Endothelial cell of umbilical vein (primary cell): ENCODE measurements at regions of chr9 and their contacts with region 1.

Region 1: GRCh38 chr9:14096258-14096922 is 217.6 kb downstream of the NFIB start:
- DNase-seq: peak; percentile 97
- H3K4me3 ChIP-seq: peak overlapping the region in 1 of 3 experiments; percentile 60
- H3K27ac ChIP-seq: peak overlapping the region; percentile 96
- H3K4me1 ChIP-seq: peaks cover 55% of the 10 kb centered on the region
- H3K27me3 ChIP-seq: no peaks in the 10 kb centered on the region
- CTCF ChIP-seq: no peak
- POLR2A ChIP-seq: peak; percentile 44

Region 2: DNA sequence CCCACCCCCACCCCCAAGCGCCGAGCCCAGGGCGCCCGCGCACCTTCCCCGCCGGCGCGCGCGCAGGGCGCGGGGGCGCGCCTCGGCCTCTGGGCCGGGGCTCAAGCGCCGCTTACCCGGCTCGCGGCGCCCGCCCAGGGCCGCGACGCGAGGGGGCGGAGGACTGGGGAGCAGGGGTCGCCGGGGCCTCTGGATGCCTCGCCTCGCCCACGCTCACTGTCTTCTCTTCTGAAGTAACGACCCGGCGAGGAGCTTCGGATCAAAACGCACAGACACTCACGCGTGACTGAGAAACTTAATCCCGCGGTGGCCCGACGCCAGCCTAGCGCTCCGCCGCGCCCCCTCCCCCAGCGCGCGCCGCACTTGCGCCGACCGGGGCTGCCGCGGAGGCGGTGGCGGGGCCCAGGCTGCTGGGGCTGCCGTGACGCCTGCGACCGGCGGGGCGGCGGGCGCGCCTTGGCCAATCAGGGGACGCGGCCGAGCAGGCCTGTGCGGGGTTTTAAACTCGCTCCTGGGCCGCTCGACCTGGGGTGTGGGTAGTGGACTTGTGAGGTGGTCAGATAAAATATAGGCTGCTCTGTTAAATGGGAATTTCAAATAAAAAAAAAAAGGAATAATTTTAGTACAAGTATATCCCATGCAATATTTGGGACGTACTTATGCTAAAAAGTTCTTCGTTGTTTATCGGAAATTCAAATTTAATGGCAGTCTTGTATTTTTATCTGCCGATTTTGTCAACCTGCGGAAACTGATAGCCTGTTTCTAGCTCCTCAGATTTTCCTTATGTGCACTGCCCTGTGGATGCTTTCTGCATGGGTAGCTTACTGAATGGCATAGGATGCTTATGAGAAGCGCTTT is 816.9 kb before region 1 on chr9 and contains the start of gene MPDZ:
- CTCF ChIA-PET with region 1: no interaction called
- POLR2A ChIA-PET with region 1: no interaction called
- dilution Hi-C with region 1: no loop called
- intact Hi-C with region 1: loop called (anchors 2 kb)
- DNase-seq: peak; percentile 81
- H3K4me3 ChIP-seq: peak within 1 kb of the TSS; percentile 22 to 74 (median 74)
- H3K27ac ChIP-seq: peak within 1 kb of the TSS; percentile 91
- H3K4me1 ChIP-seq: peaks cover 25% of the 10 kb centered on the region
- H3K27me3 ChIP-seq: no peaks in the 10 kb centered on the region
- CTCF ChIP-seq: no peak
- POLR2A ChIP-seq: peak; percentile 28
- total RNA-seq, gene MPDZ: 52.3 and 54.4 TPM in 2 replicates

Region 3: GRCh38 chr9:13705918-13706317 is 390.5 kb before region 1 on chr9:
- CTCF ChIA-PET with region 1: interaction called, 3 read pairs
- POLR2A ChIA-PET with region 1: no interaction called
- dilution Hi-C with region 1: no loop called
- intact Hi-C with region 1: loop called (anchors 1 kb)
- DNase-seq: peak; percentile 81
- H3K4me3 ChIP-seq: no peak overlapping the region
- H3K27ac ChIP-seq: peak overlapping the region; percentile 80
- H3K4me1 ChIP-seq: peaks cover 39% of the 10 kb centered on the region
- H3K27me3 ChIP-seq: no peaks in the 10 kb centered on the region
- CTCF ChIP-seq: no peak
- POLR2A ChIP-seq: no peak

Region 4: DNA sequence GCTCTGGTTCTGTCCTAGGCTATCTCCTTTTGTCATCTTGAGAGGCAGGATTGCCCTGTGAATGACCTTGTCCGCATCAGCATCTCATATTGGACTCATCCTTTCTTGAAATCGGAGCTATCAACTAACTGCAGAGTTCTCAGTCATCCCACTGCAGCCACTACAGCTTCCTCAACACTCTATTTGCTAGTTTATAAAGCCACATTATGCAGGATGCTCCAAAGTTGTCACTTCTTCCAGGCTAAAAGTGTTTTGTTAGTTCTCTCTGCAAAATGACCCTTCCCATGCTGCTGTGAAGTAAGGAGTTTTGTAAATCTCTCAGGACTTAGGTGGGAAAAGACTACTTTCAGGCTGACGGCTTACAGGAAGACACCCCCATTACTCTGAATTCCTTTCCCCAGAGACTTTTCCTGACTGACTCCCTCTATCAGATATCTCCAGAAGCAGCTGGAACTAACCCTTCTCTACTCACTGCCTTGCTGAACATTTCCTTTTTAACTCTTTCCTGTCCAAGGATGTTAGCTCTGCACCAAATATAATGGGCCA is 40.0 kb before region 1 on chr9:
- CTCF ChIA-PET with region 1: interaction called, 3 read pairs
- POLR2A ChIA-PET with region 1: no interaction called
- dilution Hi-C with region 1: no loop called
- intact Hi-C with region 1: loop called (anchors 1 kb)
- DNase-seq: peak; percentile 91
- H3K4me3 ChIP-seq: peak overlapping the region in 1 of 3 experiments; percentile 37
- H3K27ac ChIP-seq: peak overlapping the region; percentile 78
- H3K4me1 ChIP-seq: peaks cover 35% of the 10 kb centered on the region
- H3K27me3 ChIP-seq: no peaks in the 10 kb centered on the region
- CTCF ChIP-seq: no peak
- POLR2A ChIP-seq: peak; percentile 41

Region 5: DNA sequence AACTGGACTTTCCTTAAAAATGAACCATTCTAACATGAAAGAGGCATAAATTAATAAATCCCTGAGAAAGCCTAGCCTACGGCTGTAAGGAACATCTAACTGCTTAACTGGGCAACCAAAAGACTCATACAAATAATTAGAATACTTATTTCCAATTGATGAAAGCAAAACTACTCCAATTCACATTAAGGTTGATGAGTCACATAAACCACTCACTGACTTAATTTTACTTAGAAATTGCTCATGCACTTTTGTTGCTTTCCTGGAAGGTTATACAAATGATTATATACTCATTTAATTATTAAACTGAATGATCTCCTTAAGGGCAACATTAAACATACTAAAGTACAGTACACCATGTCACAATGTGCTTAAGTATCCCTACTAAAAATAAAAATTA is 115.7 kb after region 1 on chr9:
- CTCF ChIA-PET with region 1: interaction called, 3 read pairs
- POLR2A ChIA-PET with region 1: no interaction called
- dilution Hi-C with region 1: no loop called
- intact Hi-C with region 1: loop called (anchors 2 kb)
- DNase-seq: peak; percentile 59
- H3K4me3 ChIP-seq: peak overlapping the region in 1 of 3 experiments; percentile 33
- H3K27ac ChIP-seq: peak overlapping the region; percentile 41
- H3K4me1 ChIP-seq: peaks cover 79% of the 10 kb centered on the region
- H3K27me3 ChIP-seq: no peaks in the 10 kb centered on the region
- CTCF ChIP-seq: no peak
- POLR2A ChIP-seq: no peak

Region 6: GRCh38 chr9:14322211-14323082 is 226.1 kb after region 1 on chr9:
- CTCF ChIA-PET with region 1: no interaction called
- POLR2A ChIA-PET with region 1: no interaction called
- dilution Hi-C with region 1: no loop called
- intact Hi-C with region 1: loop called (anchors 1 kb)
- DNase-seq: peak; percentile 93
- H3K4me3 ChIP-seq: peak overlapping the region; percentile 44 to 91 (median 79)
- H3K27ac ChIP-seq: peak overlapping the region; percentile 94
- H3K4me1 ChIP-seq: peaks cover 62% of the 10 kb centered on the region
- H3K27me3 ChIP-seq: no peaks in the 10 kb centered on the region
- CTCF ChIP-seq: peak in 1 of 2 donors; percentile 17
- POLR2A ChIP-seq: peak; percentile 59

Region 7: GRCh38 chr9:14400658-14400995 is 304.2 kb after region 1 on chr9:
- CTCF ChIA-PET with region 1: interaction called, 7 read pairs
- POLR2A ChIA-PET with region 1: no interaction called
- dilution Hi-C with region 1: no loop called
- intact Hi-C with region 1: loop called (anchors 2 kb)
- DNase-seq: peak; percentile 90
- H3K4me3 ChIP-seq: no peak overlapping the region
- H3K27ac ChIP-seq: peak overlapping the region; percentile 80
- H3K4me1 ChIP-seq: peaks cover 16% of the 10 kb centered on the region
- H3K27me3 ChIP-seq: no peaks in the 10 kb centered on the region
- CTCF ChIP-seq: peak; percentile 58
- POLR2A ChIP-seq: no peak